ENCODE measurements at regions of chr1 and their contacts with region 1.

Region 1: GRCh38 chr1:27603681-27604578 is at the start of gene AHDC1:
- DNase-seq: peak; percentile 93 to 95 (median 94)
- ATAC-seq: peak; percentile 69 to 79 (median 76)
- H3K4me3 ChIP-seq: peak within 1 kb of the TSS; percentile 87 to 95 (median 94)
- H3K27ac ChIP-seq: peak within 1 kb of the TSS; percentile 67 to 86 (median 79)
- H3K4me1 ChIP-seq: peaks cover 0 to 21% (median 10%) of the 10 kb centered on the region in 4 donors
- H3K27me3 ChIP-seq: no peaks in the 10 kb centered on the region
- CTCF ChIP-seq: peak in 1 of 4 donors; percentile 24
- POLR2A ChIP-seq: peak; percentile 89
- total RNA-seq, gene AHDC1: 5.5 to 21.3 (median 10.9) TPM

Region 2: DNA sequence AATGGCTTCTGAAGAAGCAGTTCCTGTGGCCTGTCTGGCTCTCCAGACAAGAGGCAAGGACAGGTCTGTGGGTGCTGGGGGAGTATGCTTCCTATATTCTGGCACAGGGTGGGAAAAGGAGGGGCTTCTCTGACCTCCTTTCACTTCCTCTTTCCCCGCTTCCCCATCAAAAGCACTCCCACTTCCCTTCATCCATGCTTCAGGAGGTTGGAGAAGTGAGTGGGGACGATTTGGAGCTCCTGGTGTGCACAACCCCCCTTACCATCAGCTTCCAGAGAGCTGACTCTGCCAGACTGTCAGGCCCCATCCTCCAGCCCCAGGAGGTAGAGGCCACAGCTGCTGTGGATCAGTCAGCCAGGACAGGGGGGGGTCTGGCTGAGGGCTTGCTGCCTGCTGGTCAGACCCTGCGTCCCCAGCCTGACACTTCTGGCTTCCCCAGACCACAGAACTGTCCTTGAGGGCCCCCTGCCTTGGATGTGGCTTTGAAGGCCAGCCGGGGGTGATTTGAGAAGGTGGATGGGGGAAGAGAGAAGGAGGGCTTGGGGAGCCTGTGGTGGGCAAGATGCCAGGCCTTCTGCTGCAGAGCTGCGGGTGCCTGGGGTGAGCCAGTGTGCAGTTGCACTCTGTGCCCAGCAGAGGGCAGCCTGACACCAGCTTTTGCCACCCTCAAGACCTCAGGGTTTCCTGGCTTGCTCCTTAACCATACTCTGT is 303.4 kb before region 1 on chr1:
- intact Hi-C with region 1: loop called in 1 of 2 experiments (anchors 5 kb)
- DNase-seq: peak; percentile 81 to 83 (median 83)
- ATAC-seq: peak; percentile 89 to 94 (median 92)
- H3K4me3 ChIP-seq: no peak overlapping the region
- H3K27ac ChIP-seq: peak overlapping the region in 2 of 3 donors; percentile 21 to 43
- H3K4me1 ChIP-seq: no peaks in the 10 kb centered on the region
- H3K27me3 ChIP-seq: no peaks in the 10 kb centered on the region
- CTCF ChIP-seq: peak; percentile 97 to 99 (median 98)
- POLR2A ChIP-seq: no peak

Region 3: DNA sequence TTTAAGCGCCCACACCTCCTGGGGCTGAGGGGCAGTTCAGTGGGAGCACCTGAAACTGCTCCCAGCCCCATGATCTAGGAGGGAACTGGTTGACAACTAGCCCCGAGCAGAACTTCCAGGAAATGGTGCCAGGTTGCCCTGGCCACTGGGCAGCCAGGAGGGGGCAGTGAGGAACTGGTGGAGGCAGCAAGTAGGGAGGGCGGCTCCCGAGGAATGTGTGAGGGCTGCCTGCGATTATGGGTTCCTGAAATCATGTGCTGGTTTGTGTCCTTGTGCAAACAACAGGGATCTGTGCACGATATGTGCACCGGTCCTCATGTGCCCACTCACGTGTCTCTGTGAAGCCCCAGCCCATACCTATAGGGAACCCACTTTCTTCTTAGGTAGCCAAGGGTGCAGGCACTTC is 201.6 kb before region 1 on chr1:
- intact Hi-C with region 1: loop called (anchors 5 to 10 kb)
- DNase-seq: peak in 1 of 3 donors; percentile 74
- ATAC-seq: peak; percentile 63 to 70 (median 68)
- H3K4me3 ChIP-seq: no peak overlapping the region
- H3K27ac ChIP-seq: peak overlapping the region in 2 of 3 donors; percentile 18 to 43
- H3K4me1 ChIP-seq: peaks cover 0 to 9% (median 0%) of the 10 kb centered on the region in 4 donors
- H3K27me3 ChIP-seq: no peaks in the 10 kb centered on the region
- CTCF ChIP-seq: peak; percentile 43 to 63 (median 56)
- POLR2A ChIP-seq: no peak

Region 4: DNA sequence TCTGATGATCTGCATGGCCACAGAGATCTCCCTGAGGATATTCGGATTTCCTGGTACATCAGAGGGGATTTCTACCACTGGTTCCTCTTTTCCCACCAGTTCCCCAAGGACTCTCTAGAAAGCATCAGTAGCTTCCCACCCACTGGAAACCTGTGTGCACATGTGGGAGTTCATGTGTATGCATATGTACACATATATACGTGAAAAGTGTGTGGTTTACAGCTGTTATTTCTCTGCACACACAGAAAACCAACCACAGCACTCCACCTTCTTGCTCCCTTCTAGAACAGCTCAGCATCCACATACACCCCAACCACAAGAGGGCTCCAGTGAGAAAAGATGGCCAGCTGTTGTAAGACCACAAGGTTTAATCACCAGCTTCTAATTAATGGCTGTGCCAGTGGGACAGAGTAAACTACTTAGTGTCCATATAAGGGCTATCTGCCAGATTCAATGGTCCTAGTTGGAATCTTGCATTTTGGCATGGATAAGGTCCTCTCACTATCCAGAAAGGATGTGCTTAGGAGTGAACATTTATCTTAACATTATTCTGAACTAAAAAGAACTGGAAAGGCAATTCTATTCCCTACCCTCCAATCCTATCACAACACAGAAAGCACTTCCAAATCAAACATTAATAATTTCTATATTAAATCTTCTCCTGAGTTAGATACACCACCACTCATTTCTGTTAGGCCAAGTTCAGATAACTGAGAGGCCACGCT is 187.4 kb before region 1 on chr1:
- intact Hi-C with region 1: loop called in 1 of 2 experiments (anchors 5 kb)
- DNase-seq: no peak
- ATAC-seq: peak; percentile 66 to 83 (median 71)
- H3K4me3 ChIP-seq: no peak overlapping the region
- H3K27ac ChIP-seq: no peak overlapping the region
- H3K4me1 ChIP-seq: no peaks in the 10 kb centered on the region
- H3K27me3 ChIP-seq: no peaks in the 10 kb centered on the region
- CTCF ChIP-seq: peak; percentile 58 to 75 (median 61)
- POLR2A ChIP-seq: no peak

Region 5: DNA sequence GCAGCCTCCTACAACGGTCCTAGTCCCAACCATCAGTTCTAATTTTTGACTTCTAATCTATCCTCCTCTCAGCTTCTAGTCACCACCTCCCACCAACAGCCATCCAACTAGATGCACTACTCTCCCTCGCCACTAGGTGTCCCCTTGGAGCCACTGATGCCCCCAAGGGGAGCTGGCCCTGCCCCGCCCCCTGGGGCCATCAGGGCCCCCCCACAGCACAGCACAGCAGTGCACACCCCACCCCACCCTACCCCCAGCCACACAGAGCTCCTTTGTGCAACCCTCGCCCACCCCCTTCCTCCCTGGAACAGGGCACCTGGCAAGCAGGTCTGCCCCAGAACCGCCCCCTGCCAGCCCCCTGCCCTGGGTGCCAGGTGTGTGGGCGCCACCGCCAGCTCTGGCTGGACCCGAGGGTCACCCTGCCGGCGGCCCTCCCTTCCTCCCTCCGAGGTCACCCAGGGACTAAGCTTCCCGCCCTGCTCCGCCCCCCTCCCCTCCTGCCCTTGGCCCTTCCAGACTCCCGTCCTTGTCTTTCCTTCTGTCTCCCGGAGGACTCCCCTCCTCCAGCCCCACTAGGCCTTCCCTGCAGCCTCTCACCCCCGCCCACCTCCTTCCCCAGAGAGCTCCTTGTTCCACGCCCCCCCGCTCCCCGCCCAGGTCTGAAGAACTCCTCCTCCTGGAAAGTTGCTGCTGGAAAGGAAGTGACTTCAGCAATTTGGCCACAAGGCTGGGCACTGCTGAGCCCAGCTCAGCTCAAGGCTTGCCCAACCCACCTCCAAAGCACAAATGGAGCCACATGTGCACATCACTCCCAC is 46.9 kb before region 1 on chr1:
- intact Hi-C with region 1: loop called (anchors 5 kb)
- DNase-seq: peak; percentile 81 to 88 (median 86)
- ATAC-seq: peak; percentile 72 to 84 (median 74)
- H3K4me3 ChIP-seq: peak overlapping the region in 1 of 3 donors; percentile 31
- H3K27ac ChIP-seq: peak overlapping the region; percentile 6 to 63 (median 43)
- H3K4me1 ChIP-seq: peaks cover 0 to 28% (median 2%) of the 10 kb centered on the region in 4 donors
- H3K27me3 ChIP-seq: no peaks in the 10 kb centered on the region
- CTCF ChIP-seq: peak; percentile 80 to 96 (median 92)
- POLR2A ChIP-seq: peak; percentile 17

Region 6: DNA sequence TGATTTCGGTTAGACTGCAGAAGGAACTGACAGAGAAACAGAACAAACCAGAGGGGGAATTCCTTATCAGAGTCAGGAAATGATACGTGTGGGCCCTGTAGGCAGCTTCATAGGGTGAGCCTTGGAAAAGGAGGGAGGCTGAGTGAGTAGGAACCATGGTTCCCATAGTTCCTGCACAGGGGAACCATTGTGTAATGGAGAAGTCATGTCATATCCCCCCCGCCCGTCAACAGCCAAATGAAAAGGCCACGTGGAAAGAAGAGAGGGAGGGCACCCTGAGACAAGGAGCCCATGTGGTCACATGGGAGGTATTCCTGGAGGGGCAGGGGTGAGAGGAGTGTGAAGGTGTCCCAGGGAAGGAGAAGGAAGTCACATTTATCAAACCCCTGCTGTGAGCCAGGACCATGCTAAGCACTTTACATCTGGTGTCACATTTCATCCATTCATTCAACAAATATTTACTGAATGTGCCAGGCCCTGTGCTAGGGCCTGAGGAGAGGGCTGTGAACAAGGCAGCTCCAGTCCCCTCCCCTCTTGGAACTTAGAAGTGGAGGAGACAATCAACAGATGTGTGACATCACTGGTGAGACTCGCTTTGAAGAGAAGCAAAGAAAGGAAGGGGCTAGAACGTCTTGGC is 46.7 kb after region 1 on chr1:
- intact Hi-C with region 1: no loop called
- DNase-seq: no peak
- ATAC-seq: peak in 2 of 4 donors; percentile 27 to 58
- H3K4me3 ChIP-seq: no peak overlapping the region
- H3K27ac ChIP-seq: no peak overlapping the region
- H3K4me1 ChIP-seq: no peaks in the 10 kb centered on the region
- H3K27me3 ChIP-seq: no peaks in the 10 kb centered on the region
- CTCF ChIP-seq: no peak
- POLR2A ChIP-seq: no peak

Region 7: DNA sequence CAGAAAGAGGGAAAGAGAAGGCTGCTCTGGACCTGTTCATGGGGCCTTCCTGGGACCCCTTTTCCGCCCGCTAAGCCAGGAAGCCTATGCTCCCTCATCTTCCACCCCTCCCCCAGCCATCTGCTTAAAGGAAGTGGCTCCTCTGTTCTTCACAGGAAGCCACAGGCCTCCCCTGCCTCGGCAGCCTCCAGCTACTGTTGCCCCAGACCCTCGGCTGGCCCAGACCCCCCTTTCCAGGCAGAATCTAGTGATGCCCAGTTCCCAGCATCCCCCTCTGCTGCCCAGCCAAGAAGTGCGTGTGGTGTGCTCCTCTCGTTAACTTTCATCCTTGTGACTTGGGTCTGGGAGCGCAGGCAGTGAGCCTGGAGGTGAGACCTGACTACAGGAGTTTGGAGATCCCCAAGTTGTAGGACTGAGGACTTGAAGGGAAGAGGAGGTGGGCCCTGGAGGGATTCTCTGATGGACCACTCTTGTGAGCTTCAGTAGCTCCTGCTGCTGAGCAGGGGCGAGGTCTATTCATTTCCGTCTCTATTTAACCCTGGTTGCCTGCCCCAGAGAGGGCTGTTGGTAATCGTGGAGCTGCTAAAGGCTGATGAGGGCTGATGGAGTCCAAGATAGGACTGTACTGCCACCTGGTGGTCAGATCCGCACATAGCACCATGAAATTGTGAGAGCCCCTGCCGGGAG is 58.9 kb after region 1 on chr1:
- intact Hi-C with region 1: loop called in 1 of 2 experiments (anchors 5 kb)
- DNase-seq: peak; percentile 64 to 78 (median 73)
- ATAC-seq: peak; percentile 84 to 86 (median 85)
- H3K4me3 ChIP-seq: no peak overlapping the region
- H3K27ac ChIP-seq: peak overlapping the region in 1 of 3 donors; percentile 32
- H3K4me1 ChIP-seq: no peaks in the 10 kb centered on the region
- H3K27me3 ChIP-seq: no peaks in the 10 kb centered on the region
- CTCF ChIP-seq: peak; percentile 84 to 94 (median 86)
- POLR2A ChIP-seq: no peak